Spleen (tissue), 13 donors: ENCODE measurements at regions of chr20 and their contacts with region 1.

Region 1: DNA sequence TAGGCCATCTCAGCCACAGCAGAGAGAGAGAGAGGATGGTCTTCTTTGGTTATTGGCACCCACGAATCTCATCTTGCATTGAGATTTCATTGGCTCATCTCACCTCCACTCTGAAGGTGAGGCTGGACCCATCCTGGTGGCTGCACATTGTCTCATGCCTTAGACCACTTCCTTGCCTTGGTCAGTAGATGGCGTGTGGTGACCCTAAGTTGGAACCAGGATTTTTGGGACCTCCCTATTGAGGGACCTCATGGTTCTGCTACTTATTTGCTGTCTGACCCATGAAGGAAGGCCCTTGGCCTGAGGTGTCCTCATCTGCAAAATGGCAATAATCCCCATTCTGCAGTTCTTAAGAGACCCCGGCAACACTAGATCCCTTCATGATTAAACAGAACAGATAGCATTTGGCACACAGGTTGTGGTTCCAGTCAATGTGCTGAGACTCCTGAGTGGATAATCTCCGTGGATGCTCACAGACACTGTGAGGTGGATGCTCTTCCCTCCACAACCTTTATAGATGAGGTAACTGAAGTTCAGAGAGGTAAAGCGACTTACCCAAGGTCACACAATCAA is 21.5 kb upstream of the AAR2 start:
- DNase-seq: peak; percentile 47
- H3K4me3 ChIP-seq: no peak overlapping the region
- H3K27ac ChIP-seq: no peak overlapping the region
- H3K4me1 ChIP-seq: no peaks in the 10 kb centered on the region
- H3K27me3 ChIP-seq: no peaks in the 10 kb centered on the region
- CTCF ChIP-seq: peak in 9 of 11 experiments; percentile 6 to 60 (median 47)
- POLR2A ChIP-seq: no peak

Region 2: GRCh38 chr20:35181731-35182130 is 1033.0 kb before region 1 on chr20:
- intact Hi-C with region 1: no loop called
- DNase-seq: no peak
- H3K4me3 ChIP-seq: no peak overlapping the region
- H3K27ac ChIP-seq: no peak overlapping the region
- H3K4me1 ChIP-seq: no peaks in the 10 kb centered on the region
- H3K27me3 ChIP-seq: no peaks in the 10 kb centered on the region
- CTCF ChIP-seq: no peak
- POLR2A ChIP-seq: no peak

Region 3: GRCh38 chr20:36128463-36129159 is 86.2 kb before region 1 on chr20:
- intact Hi-C with region 1: no loop called
- DNase-seq: no peak
- H3K4me3 ChIP-seq: no peak overlapping the region
- H3K27ac ChIP-seq: no peak overlapping the region
- H3K4me1 ChIP-seq: peaks cover 0 to 5% (median 0%) of the 10 kb centered on the region in 6 donors
- H3K27me3 ChIP-seq: no peaks in the 10 kb centered on the region
- CTCF ChIP-seq: no peak
- POLR2A ChIP-seq: no peak

Region 4: DNA sequence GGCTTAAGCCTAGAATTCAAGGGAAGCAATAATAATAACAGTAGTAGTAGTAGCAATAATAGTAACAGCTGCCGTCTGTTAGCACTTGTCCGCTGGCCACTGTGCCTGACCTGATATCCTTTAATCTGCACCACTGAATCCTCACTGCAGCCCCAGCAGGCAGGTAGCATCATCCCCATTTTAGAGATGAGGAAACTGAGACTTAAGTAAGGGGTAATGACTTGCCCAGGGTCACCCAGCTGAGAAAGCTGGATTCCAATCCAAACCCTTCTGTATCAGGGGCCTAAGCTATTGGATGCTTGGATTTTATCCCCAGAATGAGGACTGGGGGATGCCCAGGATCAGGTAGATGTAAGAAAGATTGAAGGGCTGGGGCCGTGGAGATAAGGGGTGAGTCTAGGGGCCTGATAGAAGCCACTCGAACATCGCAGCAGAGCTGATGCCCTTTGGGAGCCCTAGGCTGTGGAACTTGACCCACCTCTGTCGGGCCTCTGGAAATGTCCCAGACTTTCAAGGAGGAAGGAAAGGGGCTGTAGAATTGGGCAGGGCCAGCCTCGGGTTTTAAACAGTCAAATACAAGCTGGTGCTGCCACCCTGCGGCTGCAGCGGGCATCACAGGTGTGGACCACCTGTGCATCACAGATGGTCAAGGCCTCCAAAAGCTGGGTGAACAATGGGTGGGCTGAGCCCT is 224.4 kb after region 1 on chr20:
- intact Hi-C with region 1: loop called (anchors 5 kb)
- DNase-seq: peak; percentile 88
- H3K4me3 ChIP-seq: no peak overlapping the region
- H3K27ac ChIP-seq: no peak overlapping the region
- H3K4me1 ChIP-seq: peaks cover 4 to 18% (median 12%) of the 10 kb centered on the region in 6 donors
- H3K27me3 ChIP-seq: peaks cover 0 to 15% (median 0%) of the 10 kb centered on the region in 7 donors
- CTCF ChIP-seq: peak; percentile 67 to 92 (median 85)
- POLR2A ChIP-seq: no peak